CD4-positive, alpha-beta memory T cell (primary cell): ENCODE measurements at regions of chr11 and their contacts with region 1.

Region 1: GRCh38 chr11:102268329-102269193 is 48.7 kb upstream of the BIRC3 start:
- DNase-seq: peak; percentile 80 to 88 (median 85)
- H3K4me3 ChIP-seq: peak overlapping the region; percentile 45 to 49
- H3K4me3 Mint-ChIP-seq: peak overlapping the region; percentile 65 to 84 (median 77)
- H3K27ac ChIP-seq: no peak overlapping the region
- H3K27ac Mint-ChIP-seq: peak overlapping the region; percentile 68 to 85 (median 78)
- H3K4me1 ChIP-seq: peaks cover 23% of the 10 kb centered on the region
- H3K4me1 Mint-ChIP-seq: peaks cover 21 to 37% (median 27%) of the 10 kb centered on the region in 4 donors
- H3K27me3 ChIP-seq: no peaks in the 10 kb centered on the region
- H3K27me3 Mint-ChIP-seq: peaks cover 0 to 4% of the 10 kb centered on the region in 2 donors

Region 2: GRCh38 chr11:101914738-101915426 is 353.7 kb before region 1 on chr11 and contains the start of gene CEP126:
- CTCF ChIA-PET with region 1: no interaction called
- POLR2A ChIA-PET with region 1: interaction called, 4 read pairs
- intact Hi-C with region 1: loop called (anchors 1 kb)
- DNase-seq: peak; percentile 91 to 94 (median 93)
- H3K4me3 ChIP-seq: peak within 1 kb of the TSS; percentile 43 to 64
- H3K4me3 Mint-ChIP-seq: peak within 1 kb of the TSS; percentile 88 to 96 (median 94)
- H3K27ac ChIP-seq: peak within 1 kb of the TSS; percentile 60
- H3K27ac Mint-ChIP-seq: peak within 1 kb of the TSS; percentile 89 to 94 (median 92)
- H3K4me1 ChIP-seq: peaks cover 18% of the 10 kb centered on the region
- H3K4me1 Mint-ChIP-seq: peaks cover 18 to 25% (median 22%) of the 10 kb centered on the region in 4 donors
- H3K27me3 ChIP-seq: no peaks in the 10 kb centered on the region
- H3K27me3 Mint-ChIP-seq: peaks cover 0 to 5% of the 10 kb centered on the region in 2 donors
- total RNA-seq, gene CEP126: 2.4 to 2.6 TPM

Region 3: GRCh38 chr11:102109896-102110760 is 158.4 kb before region 1 on chr11 and contains the start of gene YAP1:
- CTCF ChIA-PET with region 1: no interaction called
- POLR2A ChIA-PET with region 1: no interaction called
- intact Hi-C with region 1: no loop called
- DNase-seq: peak; percentile 58 to 69 (median 61)
- H3K4me3 ChIP-seq: peak within 1 kb of the TSS in 1 of 2 donors; percentile 55
- H3K4me3 Mint-ChIP-seq: peak within 1 kb of the TSS; percentile 92 to 97 (median 94)
- H3K27ac ChIP-seq: no peak within 1 kb of the TSS
- H3K27ac Mint-ChIP-seq: peak within 1 kb of the TSS in 6 of 7 donors; percentile 23 to 82 (median 75)
- H3K4me1 ChIP-seq: peaks cover 12% of the 10 kb centered on the region
- H3K4me1 Mint-ChIP-seq: peaks cover 5 to 12% (median 8%) of the 10 kb centered on the region in 4 donors
- H3K27me3 ChIP-seq: peaks cover 11% of the 10 kb centered on the region
- H3K27me3 Mint-ChIP-seq: peaks cover 24 to 30% of the 10 kb centered on the region in 2 donors
- total RNA-seq, gene YAP1: 0.44 to 0.75 TPM

Region 4: GRCh38 chr11:102204174-102204573 is 64.4 kb before region 1 on chr11:
- CTCF ChIA-PET with region 1: no interaction called
- POLR2A ChIA-PET with region 1: no interaction called
- intact Hi-C with region 1: no loop called
- DNase-seq: no peak
- H3K4me3 ChIP-seq: no peak overlapping the region
- H3K4me3 Mint-ChIP-seq: no peak overlapping the region
- H3K27ac ChIP-seq: no peak overlapping the region
- H3K27ac Mint-ChIP-seq: no peak overlapping the region
- H3K4me1 ChIP-seq: no peaks in the 10 kb centered on the region
- H3K4me1 Mint-ChIP-seq: no peaks in the 10 kb centered on the region
- H3K27me3 ChIP-seq: no peaks in the 10 kb centered on the region
- H3K27me3 Mint-ChIP-seq: peaks cover 14 to 15% of the 10 kb centered on the region in 2 donors

Region 5: DNA sequence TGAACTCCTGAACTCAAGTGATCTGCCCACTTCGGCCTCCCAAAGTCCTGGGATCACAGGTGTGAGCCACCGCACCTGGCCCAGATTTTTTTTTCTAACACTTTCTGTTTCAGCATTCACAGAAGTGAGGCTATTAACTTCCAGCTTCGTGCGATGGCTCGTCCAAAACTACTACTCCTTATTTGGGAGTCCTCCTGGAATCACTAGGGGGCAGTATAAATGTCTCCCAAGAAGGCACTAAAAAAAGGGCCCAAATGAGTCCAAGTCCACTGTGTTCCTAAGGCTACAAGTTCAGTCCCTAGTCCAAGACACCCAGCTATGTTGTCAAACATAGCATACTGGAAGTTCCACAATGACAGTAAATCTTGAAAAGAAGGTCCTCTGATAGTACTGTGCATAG is 14.5 kb before region 1 on chr11:
- CTCF ChIA-PET with region 1: interaction called, 12 read pairs
- POLR2A ChIA-PET with region 1: interaction called, 3 read pairs
- intact Hi-C with region 1: no loop called
- DNase-seq: peak in 1 of 5 donors; percentile 6
- H3K4me3 ChIP-seq: no peak overlapping the region
- H3K4me3 Mint-ChIP-seq: no peak overlapping the region
- H3K27ac ChIP-seq: no peak overlapping the region
- H3K27ac Mint-ChIP-seq: no peak overlapping the region
- H3K4me1 ChIP-seq: no peaks in the 10 kb centered on the region
- H3K4me1 Mint-ChIP-seq: no peaks in the 10 kb centered on the region
- H3K27me3 ChIP-seq: no peaks in the 10 kb centered on the region
- H3K27me3 Mint-ChIP-seq: no peaks in the 10 kb centered on the region

Region 6: GRCh38 chr11:102306048-102306585 is 37.6 kb after region 1 on chr11:
- CTCF ChIA-PET with region 1: interaction called, 10 read pairs
- POLR2A ChIA-PET with region 1: interaction called, 5 read pairs
- intact Hi-C with region 1: no loop called
- DNase-seq: peak in 3 of 5 donors; percentile 35 to 74 (median 40)
- H3K4me3 ChIP-seq: peak overlapping the region; percentile 3 to 14
- H3K4me3 Mint-ChIP-seq: peak overlapping the region; percentile 51 to 77 (median 69)
- H3K27ac ChIP-seq: peak overlapping the region; percentile 60
- H3K27ac Mint-ChIP-seq: peak overlapping the region; percentile 84 to 98 (median 94)
- H3K4me1 ChIP-seq: peaks cover 87% of the 10 kb centered on the region
- H3K4me1 Mint-ChIP-seq: peaks cover 54 to 85% (median 73%) of the 10 kb centered on the region in 4 donors
- H3K27me3 ChIP-seq: no peaks in the 10 kb centered on the region
- H3K27me3 Mint-ChIP-seq: no peaks in the 10 kb centered on the region

Region 7: GRCh38 chr11:102317099-102317767 is 48.7 kb after region 1 on chr11 and contains the start of gene BIRC3:
- CTCF ChIA-PET with region 1: interaction called, 3 read pairs
- POLR2A ChIA-PET with region 1: interaction called, 3 read pairs
- intact Hi-C with region 1: loop called (anchors 2 kb)
- DNase-seq: peak; percentile 93 to 99 (median 96)
- H3K4me3 ChIP-seq: peak within 1 kb of the TSS; percentile 94 to 96
- H3K4me3 Mint-ChIP-seq: peak within 1 kb of the TSS; percentile 90 to 100 (median 96)
- H3K27ac ChIP-seq: peak within 1 kb of the TSS; percentile 95
- H3K27ac Mint-ChIP-seq: peak within 1 kb of the TSS; percentile 90 to 99 (median 99)
- H3K4me1 ChIP-seq: peaks cover 59% of the 10 kb centered on the region
- H3K4me1 Mint-ChIP-seq: peaks cover 46 to 81% (median 58%) of the 10 kb centered on the region in 4 donors
- H3K27me3 ChIP-seq: no peaks in the 10 kb centered on the region
- H3K27me3 Mint-ChIP-seq: no peaks in the 10 kb centered on the region
- total RNA-seq, gene BIRC3: 197 to 198 TPM